Posterior cingulate gyrus (tissue), 11 donors: ENCODE measurements at regions of chr3 and their contacts with region 1.

Region 1: DNA sequence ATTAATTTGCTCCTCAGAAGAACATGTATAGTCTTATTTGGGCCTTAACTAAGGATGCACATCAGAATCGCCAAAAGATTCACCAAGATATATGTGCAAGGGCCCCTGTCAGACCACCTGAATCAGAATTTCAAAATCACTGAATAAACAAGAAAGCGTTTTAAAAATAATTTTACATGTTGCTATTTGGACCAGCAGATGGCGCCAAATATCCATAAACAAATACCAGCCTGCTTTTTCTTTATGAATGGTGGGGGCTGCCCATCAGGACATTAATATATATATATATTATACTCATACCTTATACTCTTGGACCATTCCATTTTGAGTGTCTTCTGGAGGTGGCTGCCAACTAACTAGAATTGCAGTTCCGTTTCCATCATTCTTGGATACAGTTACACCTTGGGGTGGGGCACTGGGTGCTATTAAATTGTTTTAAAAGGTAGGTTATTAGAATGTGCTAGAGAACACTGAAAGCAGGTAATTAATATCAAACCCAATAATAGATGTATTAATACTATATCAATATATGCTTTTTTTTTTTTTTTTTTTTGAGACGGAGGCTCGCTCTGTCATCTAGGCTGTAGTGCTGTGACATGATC is 1108.3 kb downstream of the ROBO1 start:
- DNase-seq: peak in 2 of 10 donors; percentile 27 to 47

Region 2: GRCh38 chr3:78041486-78041885 is 618.0 kb before region 1 on chr3:
- intact Hi-C with region 1: no loop called
- DNase-seq: no peak

Region 3: GRCh38 chr3:78728406-78729145 is 69.1 kb after region 1 on chr3:
- intact Hi-C with region 1: loop called (anchors 5 kb)
- DNase-seq: peak; percentile 63 to 96 (median 81)

Region 4: DNA sequence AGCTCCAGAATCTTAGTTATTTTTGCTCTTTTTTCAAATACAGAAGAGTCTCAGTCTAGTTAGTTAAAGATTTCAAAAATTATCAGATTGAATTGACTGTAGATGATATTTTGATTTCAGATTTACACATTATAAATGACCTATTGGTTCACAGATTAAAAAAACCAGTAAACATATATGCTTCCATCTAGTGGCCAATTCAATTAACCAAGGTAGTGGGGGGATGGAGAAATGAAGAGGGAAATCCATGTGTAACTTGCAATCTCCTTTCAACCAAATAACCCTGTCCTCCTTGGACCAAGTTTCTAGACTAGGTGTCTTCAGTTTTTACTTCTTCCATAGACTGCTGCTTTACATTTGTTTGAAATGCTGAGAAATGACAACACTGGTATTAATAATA is 318.6 kb after region 1 on chr3:
- intact Hi-C with region 1: loop called (anchors 5 kb)
- DNase-seq: no peak

Region 5: GRCh38 chr3:79019137-79019923 is 359.8 kb after region 1 on chr3:
- intact Hi-C with region 1: loop called (anchors 5 kb)
- DNase-seq: peak; percentile 77 to 97 (median 82)

Region 6: DNA sequence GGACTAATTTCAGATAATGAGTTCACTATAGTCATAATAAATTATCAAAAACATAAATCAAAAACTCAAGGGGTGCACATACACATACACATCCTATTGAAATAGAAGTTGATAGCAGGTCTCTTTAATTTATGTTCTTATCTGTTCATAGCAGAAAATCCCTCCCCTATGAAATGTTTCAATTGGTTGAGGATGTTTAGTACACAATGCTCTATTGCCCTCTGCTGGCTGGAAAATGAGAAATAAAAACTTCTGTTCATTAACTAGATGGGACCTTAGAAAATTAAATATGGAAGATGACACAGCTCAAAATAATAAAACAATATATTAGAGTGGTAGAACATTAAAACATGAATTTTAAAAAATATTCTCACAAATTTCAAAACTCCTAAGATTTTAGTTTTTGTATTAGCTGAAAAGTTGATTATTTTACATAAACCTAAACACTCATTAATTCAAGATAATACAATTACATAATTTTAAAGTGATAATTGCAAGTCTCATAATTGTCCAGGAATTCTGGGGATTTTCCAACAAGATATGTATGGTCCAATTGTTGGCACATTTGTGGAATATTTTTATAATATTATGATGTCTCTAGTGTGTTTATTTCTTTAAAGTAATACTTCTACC is 373.3 kb after region 1 on chr3:
- intact Hi-C with region 1: loop called (anchors 2 kb)
- DNase-seq: no peak

Region 7: DNA sequence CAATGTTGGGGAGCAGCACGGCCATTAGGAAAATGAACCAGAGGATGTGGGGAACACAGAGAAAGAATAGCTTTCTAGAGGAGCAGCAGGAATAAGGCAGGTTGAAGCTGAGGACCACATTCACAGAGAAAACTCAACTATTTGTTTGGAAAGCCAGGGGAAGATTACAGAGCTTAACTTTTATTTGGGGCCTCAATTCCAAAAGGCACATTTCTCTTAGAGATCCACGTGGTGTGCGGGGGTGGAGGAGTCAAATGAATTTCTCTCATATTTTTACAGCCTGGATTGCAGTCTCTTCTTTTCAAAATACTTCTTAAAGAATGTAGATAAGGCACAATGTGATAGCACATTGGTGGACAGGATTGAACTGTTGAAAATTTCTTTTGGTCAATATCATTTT is 854.6 kb after region 1 on chr3:
- intact Hi-C with region 1: loop called (anchors 5 kb)
- DNase-seq: no peak